ENCODE measurements at regions of chr4 and their contacts with region 1.

Region 1: DNA sequence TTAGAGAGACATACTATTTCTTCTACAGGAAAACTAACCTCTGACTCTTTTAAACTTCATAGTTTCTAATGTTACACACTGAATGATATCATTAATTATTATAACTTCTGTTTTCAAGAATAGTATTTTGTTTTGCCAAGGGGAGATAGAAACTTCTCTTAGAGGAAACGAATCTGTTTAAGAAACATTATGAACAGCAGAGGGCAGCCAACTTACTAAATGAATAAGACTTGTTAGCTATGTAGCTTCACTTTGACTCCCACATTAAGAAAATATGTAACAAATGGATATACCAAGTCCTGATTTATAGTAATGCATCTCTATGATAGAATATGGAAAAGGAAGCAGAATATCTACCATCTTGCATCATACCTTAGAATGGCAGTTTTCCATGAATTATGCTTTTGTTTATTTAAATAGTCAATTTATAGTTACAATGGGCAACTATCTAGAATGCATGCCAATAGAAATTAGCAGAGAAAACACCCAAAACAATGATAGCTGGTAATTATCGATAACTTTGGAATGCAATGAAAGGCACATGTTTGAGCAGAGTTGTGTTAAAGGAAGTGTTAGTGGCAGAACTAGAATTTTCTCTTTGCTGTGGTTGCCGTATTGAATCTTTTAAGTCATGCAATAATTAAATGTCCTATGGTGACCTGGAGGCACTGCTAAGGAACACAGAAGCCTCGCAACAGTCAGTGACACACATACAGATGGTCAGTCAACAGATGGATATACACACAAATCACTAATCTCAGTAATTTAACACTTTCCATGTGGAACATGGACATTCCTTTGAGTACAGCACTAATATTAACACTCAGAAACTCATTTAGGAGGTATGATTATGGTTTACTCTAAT is 105.7 kb upstream of the PDLIM3 start:
- DNase-seq: peak; percentile 51
- CTCF ChIP-seq: peak; percentile 37

Region 2: GRCh38 chr4:185625503-185625902 is 15.5 kb before region 1 on chr4:
- CTCF ChIA-PET with region 1: interaction called, 10 read pairs
- POLR2A ChIA-PET with region 1: no interaction called
- DNase-seq: no peak
- CTCF ChIP-seq: no peak

Region 3: GRCh38 chr4:186021461-186022167 is 380.6 kb after region 1 on chr4:
- CTCF ChIA-PET with region 1: interaction called, 36 read pairs
- POLR2A ChIA-PET with region 1: no interaction called
- DNase-seq: peak; percentile 38
- CTCF ChIP-seq: peak; percentile 58

Region 4: DNA sequence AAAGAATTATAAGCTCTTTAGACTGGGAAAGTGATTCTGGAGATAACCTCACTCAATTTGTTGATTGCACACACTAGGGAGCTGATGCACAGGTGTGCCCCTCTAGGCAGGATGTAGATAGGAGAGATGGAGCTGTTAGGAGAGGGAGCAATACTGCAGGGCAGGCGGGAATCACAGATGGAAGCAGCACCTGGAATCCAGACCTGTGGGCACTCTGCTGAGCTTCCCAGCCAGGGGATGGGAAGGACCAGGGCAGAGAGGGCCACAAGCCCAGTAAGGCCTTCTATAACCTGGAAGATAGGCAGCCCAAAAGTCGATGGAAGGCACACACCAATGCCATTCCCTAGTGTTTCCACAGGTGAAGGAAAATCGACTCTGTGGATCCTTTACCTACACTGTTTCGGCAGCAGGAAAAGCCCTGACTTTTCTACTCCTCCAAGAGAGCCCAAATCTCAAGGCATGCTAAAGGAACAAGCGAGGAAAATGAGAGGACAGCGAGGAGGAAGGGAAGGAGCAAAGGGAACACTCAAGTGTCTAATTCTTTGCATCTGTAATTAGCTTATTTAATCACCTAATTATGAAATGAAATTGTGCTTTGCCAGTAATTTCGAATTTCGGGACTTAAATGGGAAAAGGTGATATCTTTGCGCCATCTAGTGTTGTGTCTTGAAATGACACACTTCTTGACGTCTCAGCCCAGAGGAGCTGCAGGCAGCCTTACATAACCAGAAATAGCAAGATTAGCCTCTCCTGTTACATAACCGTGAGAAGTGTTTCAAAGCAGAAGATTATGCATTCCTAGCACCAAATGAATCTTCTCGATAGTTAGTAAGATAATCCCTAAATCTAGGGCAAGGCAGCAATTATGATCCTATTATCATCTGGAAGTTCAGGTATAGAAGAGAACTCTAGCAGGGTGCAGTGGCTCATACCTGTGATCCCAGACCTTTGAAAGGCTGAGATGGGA is 396.9 kb after region 1 on chr4:
- CTCF ChIA-PET with region 1: interaction called, 88 read pairs
- POLR2A ChIA-PET with region 1: no interaction called
- DNase-seq: peak; percentile 69
- CTCF ChIP-seq: peak; percentile 75

Measured in GM10248 (cell line).